Activated CD4-positive, alpha-beta T cell treated with anti-CD3 and anti-CD28 coated beads for 36 hours (primary cell): ENCODE measurements at regions of chr9 and their contacts with region 1.

Region 1: GRCh38 chr9:122125158-122125508 is 32.0 kb upstream of the TTLL11 start:
- DNase-seq: peak; percentile 88
- ATAC-seq: peak; percentile 80
- H3K4me3 Mint-ChIP-seq: no peak overlapping the region
- H3K27ac Mint-ChIP-seq: no peak overlapping the region
- H3K4me1 Mint-ChIP-seq: peaks cover 13% of the 10 kb centered on the region
- H3K27me3 Mint-ChIP-seq: peaks cover 23% of the 10 kb centered on the region

Region 2: GRCh38 chr9:121686930-121687541 is 438.1 kb before region 1 on chr9:
- CTCF ChIA-PET with region 1: no interaction called
- POLR2A ChIA-PET with region 1: no interaction called
- intact Hi-C with region 1: loop called in 1 of 2 experiments (anchors 5 kb)
- DNase-seq: peak; percentile 84
- ATAC-seq: peak; percentile 88
- H3K4me3 Mint-ChIP-seq: no peak overlapping the region
- H3K27ac Mint-ChIP-seq: no peak overlapping the region
- H3K4me1 Mint-ChIP-seq: no peaks in the 10 kb centered on the region
- H3K27me3 Mint-ChIP-seq: peaks cover 5% of the 10 kb centered on the region

Region 3: DNA sequence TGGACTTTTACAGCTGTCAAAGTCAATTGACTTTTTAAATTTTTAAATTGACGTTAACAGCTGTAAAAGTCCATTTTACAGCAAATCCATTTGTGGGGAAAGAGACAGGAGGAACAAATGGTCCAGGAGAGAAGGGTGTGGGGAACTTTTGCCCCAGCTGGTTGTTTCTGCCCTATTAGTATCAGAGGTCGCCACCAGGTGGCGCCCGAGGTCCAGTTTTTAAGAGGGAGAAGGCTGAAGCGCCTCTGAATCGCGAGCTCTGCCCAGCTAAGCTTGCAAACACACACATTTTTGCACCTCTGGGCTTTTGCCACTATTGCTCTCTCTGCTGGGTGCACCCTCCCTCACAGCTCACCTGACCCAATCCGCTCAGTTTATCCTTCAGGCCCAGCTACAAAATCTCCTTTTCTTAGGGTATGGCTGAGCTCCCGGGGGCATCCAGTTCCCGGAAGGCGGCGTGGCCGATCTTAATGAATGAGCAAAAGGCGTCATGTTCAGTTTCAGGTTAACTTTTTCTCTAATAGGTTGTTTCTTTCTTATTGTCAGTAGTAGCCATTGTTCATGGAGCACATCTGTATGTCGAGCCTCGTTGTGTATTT is 25.8 kb before region 1 on chr9:
- CTCF ChIA-PET with region 1: interaction called, 208 read pairs
- POLR2A ChIA-PET with region 1: interaction called, 5 read pairs
- intact Hi-C with region 1: loop called (anchors 1 kb)
- DNase-seq: peak; percentile 89
- ATAC-seq: peak; percentile 88
- H3K4me3 Mint-ChIP-seq: peak overlapping the region; percentile 52
- H3K27ac Mint-ChIP-seq: no peak overlapping the region
- H3K4me1 Mint-ChIP-seq: peaks cover 10% of the 10 kb centered on the region
- H3K27me3 Mint-ChIP-seq: peaks cover 14% of the 10 kb centered on the region

Region 4: DNA sequence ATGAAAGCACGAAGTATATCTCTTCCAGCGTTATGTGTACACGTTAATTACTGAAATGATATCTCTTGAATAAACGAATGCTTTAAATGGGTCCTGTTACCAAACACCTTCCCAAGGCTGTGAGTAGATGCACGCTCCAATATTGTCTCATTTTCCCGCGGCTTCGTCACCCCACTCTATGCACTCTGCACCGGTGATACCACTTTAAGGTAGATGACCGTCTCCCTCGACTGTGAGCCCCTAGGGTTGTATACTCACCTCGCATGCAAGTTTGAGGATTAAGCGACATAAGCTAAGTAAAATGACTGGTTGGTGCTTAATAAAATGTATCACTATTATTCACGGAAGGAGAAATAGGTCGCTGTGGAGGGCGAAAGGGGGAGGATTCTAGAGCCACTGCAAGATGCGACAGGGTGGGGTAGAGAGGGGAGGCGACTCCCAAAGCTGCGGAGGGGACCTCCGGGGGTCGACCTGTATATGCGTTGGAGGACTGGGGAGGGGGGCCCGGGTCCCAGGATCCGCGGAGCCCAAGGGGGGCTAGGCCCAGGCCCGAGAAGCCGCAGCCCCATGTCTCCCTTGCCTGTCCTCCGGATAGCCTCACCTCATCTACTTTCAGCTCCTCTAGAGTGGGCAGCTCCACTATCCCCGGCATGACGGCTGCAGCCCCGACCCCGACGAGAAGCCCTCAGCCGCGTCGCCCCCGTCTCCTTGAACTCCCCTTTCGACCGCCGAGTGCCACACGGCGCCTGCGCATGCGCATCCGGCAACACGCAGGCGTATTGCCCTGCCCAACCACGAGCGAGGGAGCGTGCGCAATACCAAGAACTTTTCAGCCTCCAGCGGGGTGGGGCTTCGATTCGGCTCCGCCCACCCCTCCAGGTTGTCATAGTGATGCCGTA is 34.1 kb after region 1 on chr9 and contains the starts of genes MORN5 and NDUFA8:
- CTCF ChIA-PET with region 1: interaction called, 47 read pairs
- POLR2A ChIA-PET with region 1: no interaction called
- intact Hi-C with region 1: loop called in 1 of 2 experiments (anchors 2 kb)
- DNase-seq: peak; percentile 98
- ATAC-seq: peak; percentile 97
- H3K4me3 Mint-ChIP-seq: peak within 1 kb of the TSS; percentile 95
- H3K27ac Mint-ChIP-seq: peak within 1 kb of the TSS; percentile 96
- H3K4me1 Mint-ChIP-seq: peaks cover 33% of the 10 kb centered on the region
- H3K27me3 Mint-ChIP-seq: peaks cover 13% of the 10 kb centered on the region
- total RNA-seq, gene MORN5: not detected
- total RNA-seq, gene NDUFA8: 50.4 to 57.2 TPM

Region 5: GRCh38 chr9:122453677-122454135 is 328.6 kb after region 1 on chr9:
- CTCF ChIA-PET with region 1: interaction called, 4 read pairs
- POLR2A ChIA-PET with region 1: no interaction called
- intact Hi-C with region 1: loop called in 1 of 2 experiments (anchors 1 kb)
- DNase-seq: no peak
- ATAC-seq: no peak
- H3K4me3 Mint-ChIP-seq: no peak overlapping the region
- H3K27ac Mint-ChIP-seq: no peak overlapping the region
- H3K4me1 Mint-ChIP-seq: no peaks in the 10 kb centered on the region
- H3K27me3 Mint-ChIP-seq: peaks cover 11% of the 10 kb centered on the region